GM23248 (cell line): ENCODE measurements at regions of chr4 and their contacts with region 1.

Region 1: GRCh38 chr4:124334119-124334518 is 378.4 kb downstream of the ANKRD50 start:
- DNase-seq: peak; percentile 87
- H3K4me3 ChIP-seq: peak overlapping the region; percentile 41
- H3K27ac ChIP-seq: no peak overlapping the region
- H3K4me1 ChIP-seq: 0 out of 2 replicates have a peak, but pooled peaks cover 4% of the 10 kb centered on the region
- H3K27me3 ChIP-seq: no peaks in the 10 kb centered on the region

Region 2: DNA sequence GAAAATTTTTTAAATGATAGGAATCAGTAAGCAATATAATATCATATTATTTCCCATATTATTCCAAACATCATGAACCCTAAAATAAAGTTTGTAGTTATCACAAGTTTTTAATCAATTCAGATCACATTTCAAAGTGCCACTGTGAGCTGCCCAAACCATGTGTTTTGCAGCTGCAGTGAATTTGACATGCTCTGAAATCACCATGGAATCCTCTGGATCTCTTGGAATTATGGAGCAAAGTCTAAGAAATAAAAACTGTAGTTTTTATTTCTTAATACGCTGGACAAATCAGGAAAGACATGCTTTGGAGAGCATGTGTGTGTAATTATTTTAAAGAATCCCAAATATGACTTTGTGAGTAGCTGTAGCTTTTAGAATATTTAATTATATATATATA is 115.8 kb after region 1 on chr4:
- in situ Hi-C with region 1: no loop called
- DNase-seq: no peak
- H3K4me3 ChIP-seq: no peak overlapping the region
- H3K27ac ChIP-seq: peak overlapping the region; percentile 62
- H3K4me1 ChIP-seq: peaks cover 21% of the 10 kb centered on the region
- H3K27me3 ChIP-seq: no peaks in the 10 kb centered on the region

Region 3: GRCh38 chr4:125266901-125267604 is 932.9 kb after region 1 on chr4:
- in situ Hi-C with region 1: loop called (anchors 10 kb)
- DNase-seq: peak; percentile 84
- H3K4me3 ChIP-seq: peak overlapping the region; percentile 56
- H3K27ac ChIP-seq: peak overlapping the region; percentile 54
- H3K4me1 ChIP-seq: peaks cover 17% of the 10 kb centered on the region
- H3K27me3 ChIP-seq: no peaks in the 10 kb centered on the region